B cell (primary cell): ENCODE measurements at regions of chr13 and their contacts with region 1.

Region 1: GRCh38 chr13:99436686-99437416 is 64.4 kb upstream of the TM9SF2 start:
- DNase-seq: peak; percentile 96
- ATAC-seq: peak; percentile 69
- H3K4me3 ChIP-seq: peak overlapping the region in 2 of 5 experiments; percentile 6 to 27
- H3K4me3 Mint-ChIP-seq: peak overlapping the region; percentile 76
- H3K27ac ChIP-seq: no peak overlapping the region
- H3K27ac Mint-ChIP-seq: peak overlapping the region; percentile 81
- H3K4me1 ChIP-seq: peaks cover 49 to 70% of the 10 kb centered on the region in 2 donors
- H3K4me1 Mint-ChIP-seq: peaks cover 64% of the 10 kb centered on the region
- H3K27me3 ChIP-seq: no peaks in the 10 kb centered on the region
- H3K27me3 Mint-ChIP-seq: no peaks in the 10 kb centered on the region
- CTCF ChIP-seq: peak; percentile 100

Region 2: GRCh38 chr13:99087096-99087953 is 349.5 kb before region 1 on chr13:
- CTCF ChIA-PET with region 1: no interaction called
- POLR2A ChIA-PET with region 1: no interaction called
- intact Hi-C with region 1: loop called (anchors 5 kb)
- DNase-seq: peak; percentile 94
- ATAC-seq: peak; percentile 74
- H3K4me3 ChIP-seq: peak overlapping the region; percentile 65 to 89 (median 88)
- H3K4me3 Mint-ChIP-seq: peak overlapping the region; percentile 100
- H3K27ac ChIP-seq: peak overlapping the region; percentile 82 to 92
- H3K27ac Mint-ChIP-seq: peak overlapping the region; percentile 99
- H3K4me1 ChIP-seq: peaks cover 26 to 27% of the 10 kb centered on the region in 2 donors
- H3K4me1 Mint-ChIP-seq: peaks cover 32% of the 10 kb centered on the region
- H3K27me3 ChIP-seq: peaks cover 0 to 3% (median 0%) of the 10 kb centered on the region in 4 experiments
- H3K27me3 Mint-ChIP-seq: peaks cover 5% of the 10 kb centered on the region
- CTCF ChIP-seq: peak; percentile 42

Region 3: GRCh38 chr13:99281811-99282263 is 155.0 kb before region 1 on chr13:
- CTCF ChIA-PET with region 1: interaction called, 545 read pairs
- POLR2A ChIA-PET with region 1: no interaction called
- intact Hi-C with region 1: no loop called
- DNase-seq: no peak
- ATAC-seq: peak; percentile 82
- H3K4me3 ChIP-seq: peak overlapping the region in 3 of 5 experiments; percentile 15 to 32 (median 31)
- H3K4me3 Mint-ChIP-seq: peak overlapping the region; percentile 73
- H3K27ac ChIP-seq: peak overlapping the region; percentile 85 to 89
- H3K27ac Mint-ChIP-seq: peak overlapping the region; percentile 95
- H3K4me1 ChIP-seq: peaks cover 87 to 88% of the 10 kb centered on the region in 2 donors
- H3K4me1 Mint-ChIP-seq: peaks cover 87% of the 10 kb centered on the region
- H3K27me3 ChIP-seq: no peaks in the 10 kb centered on the region
- H3K27me3 Mint-ChIP-seq: no peaks in the 10 kb centered on the region
- CTCF ChIP-seq: no peak

Region 4: GRCh38 chr13:99322297-99323103 is 114.4 kb before region 1 on chr13:
- CTCF ChIA-PET with region 1: interaction called, 20 read pairs
- POLR2A ChIA-PET with region 1: no interaction called
- intact Hi-C with region 1: no loop called
- DNase-seq: peak; percentile 46
- ATAC-seq: peak; percentile 78
- H3K4me3 ChIP-seq: no peak overlapping the region
- H3K4me3 Mint-ChIP-seq: peak overlapping the region; percentile 77
- H3K27ac ChIP-seq: peak overlapping the region; percentile 56 to 73
- H3K27ac Mint-ChIP-seq: peak overlapping the region; percentile 91
- H3K4me1 ChIP-seq: peaks cover 43 to 49% of the 10 kb centered on the region in 2 donors
- H3K4me1 Mint-ChIP-seq: peaks cover 58% of the 10 kb centered on the region
- H3K27me3 ChIP-seq: no peaks in the 10 kb centered on the region
- H3K27me3 Mint-ChIP-seq: no peaks in the 10 kb centered on the region
- CTCF ChIP-seq: no peak

Region 5: DNA sequence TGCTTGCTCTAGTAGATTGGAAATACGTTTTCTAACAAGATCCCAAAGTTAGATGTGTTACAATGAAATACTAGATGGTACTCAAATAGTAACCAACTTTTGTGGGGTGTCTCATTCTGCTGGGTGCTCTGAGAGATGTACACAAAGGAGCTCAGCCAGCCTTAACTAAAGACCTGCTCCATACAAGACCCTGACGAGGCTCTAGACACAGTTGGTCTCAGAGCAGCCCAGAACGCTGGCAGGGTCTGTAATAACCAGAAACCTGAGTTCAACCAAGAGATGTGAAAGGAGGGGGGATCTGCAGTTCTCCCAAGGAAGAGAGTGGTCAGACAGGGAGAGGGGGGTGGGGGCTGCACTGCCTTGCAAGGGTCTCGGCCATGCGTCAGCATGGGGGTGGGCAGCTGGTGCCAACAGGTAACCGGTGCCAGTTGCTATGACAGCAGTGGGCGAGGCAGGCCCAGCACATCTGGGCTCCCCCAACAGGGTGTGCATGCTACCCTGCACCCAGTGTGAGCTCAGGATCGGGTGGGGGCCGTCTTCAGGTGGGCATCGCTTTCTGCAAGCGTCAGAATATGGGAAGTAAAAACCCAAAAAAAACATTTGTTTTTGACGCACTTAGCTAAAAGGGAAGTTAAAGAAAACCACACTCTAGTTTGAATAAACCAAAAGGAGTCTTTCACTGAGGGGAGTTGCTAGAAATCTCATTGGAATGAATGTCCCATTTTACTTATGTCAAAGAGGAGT is 61.7 kb before region 1 on chr13:
- CTCF ChIA-PET with region 1: interaction called, 260 read pairs
- POLR2A ChIA-PET with region 1: interaction called, 5 read pairs
- intact Hi-C with region 1: loop called (anchors 1 kb)
- DNase-seq: peak; percentile 96
- ATAC-seq: peak; percentile 78
- H3K4me3 ChIP-seq: peak overlapping the region in 4 of 5 experiments; percentile 9 to 42 (median 34)
- H3K4me3 Mint-ChIP-seq: peak overlapping the region; percentile 77
- H3K27ac ChIP-seq: peak overlapping the region; percentile 99 to 100
- H3K27ac Mint-ChIP-seq: peak overlapping the region; percentile 98
- H3K4me1 ChIP-seq: peaks cover 77 to 90% of the 10 kb centered on the region in 2 donors
- H3K4me1 Mint-ChIP-seq: peaks cover 86% of the 10 kb centered on the region
- H3K27me3 ChIP-seq: no peaks in the 10 kb centered on the region
- H3K27me3 Mint-ChIP-seq: no peaks in the 10 kb centered on the region
- CTCF ChIP-seq: no peak

Region 6: DNA sequence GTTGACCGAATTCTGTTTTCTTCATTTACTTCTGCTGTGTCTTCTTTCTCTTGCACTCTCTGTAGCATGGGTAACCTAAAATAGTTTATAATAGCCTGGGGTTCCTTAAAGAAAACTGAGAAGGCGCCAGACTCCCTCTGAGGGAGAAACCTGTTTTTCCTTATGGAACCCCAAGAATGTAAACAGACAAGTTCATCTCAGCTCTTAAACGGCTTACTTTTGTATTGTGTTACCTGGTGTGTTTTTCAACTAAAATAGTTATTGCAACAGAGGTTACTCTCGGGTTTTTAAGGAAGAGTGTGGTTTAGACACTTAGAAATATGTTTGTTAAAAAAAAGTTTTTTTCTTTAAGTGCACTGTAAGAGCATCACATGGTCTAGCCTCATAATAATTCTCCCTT is 40.7 kb after region 1 on chr13:
- CTCF ChIA-PET with region 1: no interaction called
- POLR2A ChIA-PET with region 1: no interaction called
- intact Hi-C with region 1: no loop called
- DNase-seq: no peak
- ATAC-seq: no peak
- H3K4me3 ChIP-seq: no peak overlapping the region
- H3K4me3 Mint-ChIP-seq: no peak overlapping the region
- H3K27ac ChIP-seq: no peak overlapping the region
- H3K27ac Mint-ChIP-seq: no peak overlapping the region
- H3K4me1 ChIP-seq: no peaks in the 10 kb centered on the region
- H3K4me1 Mint-ChIP-seq: no peaks in the 10 kb centered on the region
- H3K27me3 ChIP-seq: no peaks in the 10 kb centered on the region
- H3K27me3 Mint-ChIP-seq: no peaks in the 10 kb centered on the region
- CTCF ChIP-seq: no peak

Region 7: GRCh38 chr13:99501184-99501847 is 64.5 kb after region 1 on chr13 and contains the start of gene TM9SF2:
- CTCF ChIA-PET with region 1: interaction called, 28 read pairs
- POLR2A ChIA-PET with region 1: no interaction called
- intact Hi-C with region 1: loop called (anchors 1 kb)
- DNase-seq: peak; percentile 98
- ATAC-seq: peak; percentile 60
- H3K4me3 ChIP-seq: peak within 1 kb of the TSS; percentile 75 to 89 (median 87)
- H3K4me3 Mint-ChIP-seq: peak within 1 kb of the TSS; percentile 92
- H3K27ac ChIP-seq: peak within 1 kb of the TSS; percentile 89 to 90
- H3K27ac Mint-ChIP-seq: peak within 1 kb of the TSS; percentile 98
- H3K4me1 ChIP-seq: peaks cover 63 to 65% of the 10 kb centered on the region in 2 donors
- H3K4me1 Mint-ChIP-seq: peaks cover 77% of the 10 kb centered on the region
- H3K27me3 ChIP-seq: no peaks in the 10 kb centered on the region
- H3K27me3 Mint-ChIP-seq: no peaks in the 10 kb centered on the region
- CTCF ChIP-seq: no peak
- total RNA-seq, gene TM9SF2: 63.3 and 63.6 TPM in 2 replicates

Region 8: GRCh38 chr13:100051070-100051469 is 614.2 kb after region 1 on chr13:
- CTCF ChIA-PET with region 1: no interaction called
- POLR2A ChIA-PET with region 1: no interaction called
- intact Hi-C with region 1: no loop called
- DNase-seq: no peak
- ATAC-seq: no peak
- H3K4me3 ChIP-seq: no peak overlapping the region
- H3K4me3 Mint-ChIP-seq: no peak overlapping the region
- H3K27ac ChIP-seq: no peak overlapping the region
- H3K27ac Mint-ChIP-seq: no peak overlapping the region
- H3K4me1 ChIP-seq: no peaks in the 10 kb centered on the region
- H3K4me1 Mint-ChIP-seq: no peaks in the 10 kb centered on the region
- H3K27me3 ChIP-seq: no peaks in the 10 kb centered on the region
- H3K27me3 Mint-ChIP-seq: peaks cover 2% of the 10 kb centered on the region
- CTCF ChIP-seq: no peak

Region 9: GRCh38 chr13:100434010-100434763 is 997.3 kb after region 1 on chr13:
- CTCF ChIA-PET with region 1: no interaction called
- POLR2A ChIA-PET with region 1: no interaction called
- intact Hi-C with region 1: no loop called
- DNase-seq: no peak
- ATAC-seq: no peak
- H3K4me3 ChIP-seq: no peak overlapping the region
- H3K4me3 Mint-ChIP-seq: no peak overlapping the region
- H3K27ac ChIP-seq: no peak overlapping the region
- H3K27ac Mint-ChIP-seq: no peak overlapping the region
- H3K4me1 ChIP-seq: no peaks in the 10 kb centered on the region
- H3K4me1 Mint-ChIP-seq: no peaks in the 10 kb centered on the region
- H3K27me3 ChIP-seq: no peaks in the 10 kb centered on the region
- H3K27me3 Mint-ChIP-seq: no peaks in the 10 kb centered on the region
- CTCF ChIP-seq: no peak